Heart right ventricle (tissue), 16 donors: ENCODE measurements at regions of chr15 and their contacts with region 1.

Region 1: DNA sequence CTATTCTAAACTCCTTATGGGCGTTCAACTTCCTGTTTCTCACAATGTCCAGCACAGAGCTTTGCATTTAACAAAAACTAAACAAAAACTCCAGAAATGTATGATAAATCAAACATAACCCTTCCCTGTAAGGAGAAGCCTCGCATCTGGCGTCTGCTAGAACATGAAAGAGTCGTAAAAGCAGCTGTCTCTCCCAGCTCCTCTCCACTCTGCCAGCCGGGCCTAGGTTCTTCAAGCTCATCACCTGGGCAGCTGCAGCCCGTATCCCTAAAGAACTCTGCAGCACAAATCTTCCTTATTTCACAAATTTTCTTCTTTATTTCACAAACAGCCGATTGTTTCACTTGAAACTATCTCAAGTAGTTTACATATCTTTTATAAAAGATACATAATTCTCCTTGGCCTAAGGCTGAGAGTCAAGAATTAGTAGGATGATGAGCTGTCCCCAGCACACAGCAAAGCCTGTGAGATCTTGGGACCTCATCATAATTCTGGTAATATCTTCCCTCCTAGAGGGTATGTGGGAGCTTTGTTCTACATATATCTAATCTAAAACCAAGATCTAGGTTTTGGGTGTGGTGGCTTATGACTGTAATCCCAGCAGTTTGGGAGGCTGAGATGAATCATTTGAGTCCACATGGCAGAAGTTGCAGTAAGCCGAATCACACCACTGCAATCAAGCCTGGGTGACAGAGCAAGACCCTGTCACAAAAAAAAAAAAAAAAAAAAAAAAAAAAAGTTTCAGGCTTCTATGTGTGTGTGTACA is 35.3 kb downstream of the ANXA2 start:
- DNase-seq: no peak
- ATAC-seq: peak in 7 of 8 donors; percentile 11 to 72 (median 52)
- H3K4me3 ChIP-seq: no peak overlapping the region
- H3K27ac ChIP-seq: peak overlapping the region in 9 of 10 donors; percentile 17 to 82 (median 65)
- H3K4me1 ChIP-seq: peaks cover 0 to 66% (median 47%) of the 10 kb centered on the region in 9 donors
- H3K27me3 ChIP-seq: no peaks in the 10 kb centered on the region
- CTCF ChIP-seq: no peak

Region 2: DNA sequence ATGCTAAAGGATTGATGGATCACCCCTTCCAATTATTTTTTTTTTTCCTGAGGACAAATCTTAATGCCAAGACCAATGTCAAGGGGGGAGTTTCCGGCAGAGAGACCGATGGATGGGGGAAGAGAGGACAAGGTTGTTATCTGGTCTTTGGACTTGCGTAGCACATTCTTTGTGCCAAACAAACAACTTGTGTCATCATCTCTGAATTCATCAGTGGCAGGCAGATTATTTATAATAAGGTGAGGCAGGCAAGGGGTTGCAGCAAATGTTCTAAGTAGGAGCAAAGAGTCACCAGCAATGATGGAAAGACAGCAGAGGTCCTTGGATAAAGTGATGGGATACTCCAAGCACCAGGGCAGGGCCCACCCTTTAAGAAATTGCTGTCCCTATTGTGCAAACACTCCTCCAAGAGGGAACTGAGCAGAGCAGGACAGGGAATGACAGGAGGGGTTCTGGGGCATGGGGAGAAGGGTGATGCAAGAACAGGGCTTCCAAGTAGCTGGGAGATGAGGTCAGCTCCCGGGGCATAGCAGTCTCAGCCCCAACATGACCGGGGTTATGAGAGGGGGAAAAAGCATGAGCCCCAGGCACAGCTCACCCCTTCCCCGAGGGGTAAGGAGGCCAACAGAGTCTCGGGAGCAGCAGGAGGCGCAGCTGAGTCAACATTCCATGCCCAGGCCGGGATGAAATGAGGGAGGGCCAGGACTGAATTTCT is 22.1 kb before region 1 on chr15:
- intact Hi-C with region 1: no loop called
- DNase-seq: no peak
- ATAC-seq: peak in 1 of 8 donors; percentile 57
- H3K4me3 ChIP-seq: no peak overlapping the region
- H3K27ac ChIP-seq: no peak overlapping the region
- H3K4me1 ChIP-seq: peaks cover 0 to 9% (median 0%) of the 10 kb centered on the region in 9 donors
- H3K27me3 ChIP-seq: no peaks in the 10 kb centered on the region
- CTCF ChIP-seq: no peak

Region 3: GRCh38 chr15:60397772-60398445 is 35.4 kb after region 1 on chr15 and contains the start of gene ANXA2:
- intact Hi-C with region 1: loop called in 7 of 10 experiments (anchors 2 to 5 kb)
- DNase-seq: peak; percentile 87 to 88
- ATAC-seq: peak; percentile 80 to 95 (median 85)
- H3K4me3 ChIP-seq: peak within 1 kb of the TSS; percentile 59 to 94 (median 88)
- H3K27ac ChIP-seq: peak within 1 kb of the TSS; percentile 90 to 98 (median 97)
- H3K4me1 ChIP-seq: peaks cover 16 to 52% (median 40%) of the 10 kb centered on the region in 9 donors
- H3K27me3 ChIP-seq: no peaks in the 10 kb centered on the region
- CTCF ChIP-seq: no peak
- total RNA-seq, gene ANXA2: 98.7 to 341 (median 123) TPM

Region 4: GRCh38 chr15:60438646-60439045 is 76.1 kb after region 1 on chr15:
- intact Hi-C with region 1: loop called in 6 of 10 experiments (anchors 2 to 5 kb)
- DNase-seq: no peak
- ATAC-seq: no peak
- H3K4me3 ChIP-seq: no peak overlapping the region
- H3K27ac ChIP-seq: no peak overlapping the region
- H3K4me1 ChIP-seq: no peaks in the 10 kb centered on the region
- H3K27me3 ChIP-seq: no peaks in the 10 kb centered on the region
- CTCF ChIP-seq: no peak

Region 5: DNA sequence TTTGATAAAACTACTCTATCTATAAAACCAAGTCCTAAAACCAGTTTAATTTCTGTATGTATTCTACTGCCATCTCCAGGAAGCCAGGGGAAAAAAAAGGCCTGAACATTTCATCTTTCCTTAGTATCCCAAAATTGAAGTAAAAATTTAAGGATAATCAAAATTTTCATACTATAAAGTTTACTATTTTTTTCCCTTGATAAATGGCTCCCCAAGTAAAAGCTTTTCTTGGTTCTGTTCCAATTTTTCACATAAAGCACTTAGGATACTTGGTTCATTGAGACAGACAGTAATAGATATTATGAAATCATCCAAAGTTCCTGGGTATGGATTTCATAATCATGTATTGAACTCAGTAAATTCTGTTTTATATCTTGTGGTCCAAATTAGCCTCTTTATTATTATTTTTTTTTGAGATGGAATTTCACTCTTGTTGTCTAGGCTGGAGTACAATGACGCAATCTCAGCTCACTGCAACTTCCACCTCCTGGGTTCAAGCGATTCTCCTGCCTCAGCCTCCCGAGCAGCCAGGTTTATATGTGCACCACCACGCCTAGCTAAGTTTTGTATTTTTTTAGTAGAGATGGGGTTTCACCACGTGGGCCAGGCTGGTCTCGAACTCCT is 81.9 kb after region 1 on chr15:
- intact Hi-C with region 1: loop called (anchors 1 to 5 kb)
- DNase-seq: no peak
- ATAC-seq: no peak
- H3K4me3 ChIP-seq: no peak overlapping the region
- H3K27ac ChIP-seq: no peak overlapping the region
- H3K4me1 ChIP-seq: peaks cover 0 to 6% (median 0%) of the 10 kb centered on the region in 9 donors
- H3K27me3 ChIP-seq: no peaks in the 10 kb centered on the region
- CTCF ChIP-seq: peak; percentile 23 to 76 (median 68)